Activated naive CD4-positive, alpha-beta T cell treated with anti-CD3 and anti-CD28 coated beads for 36 hours (primary cell): ENCODE measurements at regions of chr22 and their contacts with region 1.

Region 1: GRCh38 chr22:36528795-36529751 is at the start of gene EIF3D:
- DNase-seq: peak; percentile 99
- H3K4me3 Mint-ChIP-seq: peak within 1 kb of the TSS; percentile 96
- H3K27ac Mint-ChIP-seq: peak within 1 kb of the TSS; percentile 99
- H3K4me1 Mint-ChIP-seq: peaks cover 31% of the 10 kb centered on the region
- H3K27me3 Mint-ChIP-seq: no peaks in the 10 kb centered on the region
- total RNA-seq, gene EIF3D: 334 to 341 TPM

Region 2: GRCh38 chr22:36356708-36357694 is 172.1 kb before region 1 on chr22:
- CTCF ChIA-PET with region 1: no interaction called
- intact Hi-C with region 1: loop called (anchors 1 kb)
- DNase-seq: peak; percentile 78
- H3K4me3 Mint-ChIP-seq: peak overlapping the region; percentile 73
- H3K27ac Mint-ChIP-seq: peak overlapping the region; percentile 96
- H3K4me1 Mint-ChIP-seq: peaks cover 98% of the 10 kb centered on the region
- H3K27me3 Mint-ChIP-seq: no peaks in the 10 kb centered on the region

Region 3: DNA sequence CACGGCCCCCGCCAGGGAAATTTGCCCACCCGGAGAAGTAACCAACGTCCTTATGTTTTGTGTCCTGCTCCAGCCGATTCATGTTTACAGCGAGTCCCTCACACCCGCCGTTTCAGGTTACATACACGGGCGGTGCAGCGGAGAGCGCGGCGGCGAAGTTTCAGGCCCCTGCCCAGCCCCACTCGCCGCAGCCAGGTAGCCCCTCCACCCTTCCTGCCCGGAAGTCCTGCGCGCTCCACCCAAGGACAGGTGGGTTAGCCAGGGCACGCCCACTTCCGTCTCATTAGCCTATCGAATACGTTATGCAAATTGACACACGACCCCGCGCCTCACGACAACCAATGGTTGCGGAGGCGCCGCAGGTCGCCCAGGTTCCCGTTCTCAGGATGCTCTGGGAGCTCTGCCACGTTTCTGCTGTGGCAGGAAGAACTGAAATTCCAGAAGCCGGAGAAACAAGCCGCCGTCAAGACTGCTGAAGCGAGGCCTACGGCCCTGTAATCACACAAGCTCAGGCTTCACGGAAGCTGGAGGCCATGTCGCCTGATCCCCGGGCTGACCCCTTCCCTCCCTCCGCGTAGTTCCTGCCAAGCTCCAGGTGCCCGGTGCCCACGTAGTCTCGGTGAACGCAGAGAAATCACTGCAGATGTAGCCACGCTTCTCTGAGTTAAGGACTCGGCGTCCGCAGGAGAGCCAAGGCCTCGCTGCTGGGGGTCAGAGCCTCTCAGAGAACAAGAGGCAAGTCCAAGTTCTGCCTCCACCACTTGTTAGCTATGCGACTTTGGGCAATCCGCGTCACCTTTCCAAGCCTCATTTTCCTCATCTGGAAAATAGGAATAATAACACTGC is 118.9 kb before region 1 on chr22:
- CTCF ChIA-PET with region 1: no interaction called
- intact Hi-C with region 1: no loop called
- DNase-seq: peak; percentile 84
- H3K4me3 Mint-ChIP-seq: peak overlapping the region; percentile 78
- H3K27ac Mint-ChIP-seq: peak overlapping the region; percentile 76
- H3K4me1 Mint-ChIP-seq: peaks cover 30% of the 10 kb centered on the region
- H3K27me3 Mint-ChIP-seq: no peaks in the 10 kb centered on the region

Region 4: DNA sequence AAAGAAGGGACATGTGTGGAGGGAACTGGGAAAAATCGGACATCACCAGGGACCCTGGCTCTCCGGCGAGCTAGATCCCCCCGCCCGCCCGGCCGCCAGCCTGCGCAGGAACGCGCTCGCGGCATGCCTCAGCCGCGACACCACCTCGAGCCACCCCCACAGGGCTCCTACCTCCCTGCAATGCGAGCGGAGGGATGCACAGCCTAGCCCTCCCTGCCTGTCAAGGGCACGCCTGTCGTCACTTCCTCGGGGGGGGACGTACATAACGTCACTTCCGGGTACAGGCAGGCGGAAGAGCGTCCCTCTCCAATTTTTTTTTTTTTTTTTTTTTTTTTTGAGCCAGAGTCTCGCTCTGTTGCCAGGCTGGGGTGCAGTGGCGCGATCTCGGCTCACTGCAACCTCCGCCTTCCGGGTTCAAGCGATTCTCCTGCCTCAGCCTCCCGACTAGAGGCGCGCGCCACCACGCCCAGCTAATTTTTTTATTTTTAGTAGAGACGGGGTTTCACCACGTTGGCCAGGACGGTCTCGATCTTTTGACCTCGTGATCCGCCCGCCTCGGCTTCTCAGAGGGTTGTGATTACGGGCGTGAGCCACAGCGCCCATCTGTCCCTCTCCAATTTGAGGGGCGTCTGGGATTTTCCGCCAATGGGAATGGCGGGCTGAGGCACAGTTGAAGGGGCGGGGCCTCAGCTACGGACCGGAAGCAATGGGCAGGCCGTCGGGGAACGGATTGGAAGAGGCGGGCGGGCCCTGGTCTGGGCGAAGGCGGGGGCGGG is 47.5 kb before region 1 on chr22 and contains the start of gene TXN2:
- CTCF ChIA-PET with region 1: interaction called, 3 read pairs
- intact Hi-C with region 1: loop called (anchors 1 kb)
- DNase-seq: peak; percentile 98
- H3K4me3 Mint-ChIP-seq: peak within 1 kb of the TSS; percentile 95
- H3K27ac Mint-ChIP-seq: peak within 1 kb of the TSS; percentile 89
- H3K4me1 Mint-ChIP-seq: peaks cover 13% of the 10 kb centered on the region
- H3K27me3 Mint-ChIP-seq: no peaks in the 10 kb centered on the region
- total RNA-seq, gene TXN2: 108 to 113 TPM

Region 5: GRCh38 chr22:36546092-36546804 is 17.2 kb after region 1 on chr22:
- CTCF ChIA-PET with region 1: interaction called, 3 read pairs
- intact Hi-C with region 1: loop called (anchors 1 kb)
- DNase-seq: peak; percentile 59
- H3K4me3 Mint-ChIP-seq: no peak overlapping the region
- H3K27ac Mint-ChIP-seq: no peak overlapping the region
- H3K4me1 Mint-ChIP-seq: peaks cover 12% of the 10 kb centered on the region
- H3K27me3 Mint-ChIP-seq: peaks cover 15% of the 10 kb centered on the region

Region 6: DNA sequence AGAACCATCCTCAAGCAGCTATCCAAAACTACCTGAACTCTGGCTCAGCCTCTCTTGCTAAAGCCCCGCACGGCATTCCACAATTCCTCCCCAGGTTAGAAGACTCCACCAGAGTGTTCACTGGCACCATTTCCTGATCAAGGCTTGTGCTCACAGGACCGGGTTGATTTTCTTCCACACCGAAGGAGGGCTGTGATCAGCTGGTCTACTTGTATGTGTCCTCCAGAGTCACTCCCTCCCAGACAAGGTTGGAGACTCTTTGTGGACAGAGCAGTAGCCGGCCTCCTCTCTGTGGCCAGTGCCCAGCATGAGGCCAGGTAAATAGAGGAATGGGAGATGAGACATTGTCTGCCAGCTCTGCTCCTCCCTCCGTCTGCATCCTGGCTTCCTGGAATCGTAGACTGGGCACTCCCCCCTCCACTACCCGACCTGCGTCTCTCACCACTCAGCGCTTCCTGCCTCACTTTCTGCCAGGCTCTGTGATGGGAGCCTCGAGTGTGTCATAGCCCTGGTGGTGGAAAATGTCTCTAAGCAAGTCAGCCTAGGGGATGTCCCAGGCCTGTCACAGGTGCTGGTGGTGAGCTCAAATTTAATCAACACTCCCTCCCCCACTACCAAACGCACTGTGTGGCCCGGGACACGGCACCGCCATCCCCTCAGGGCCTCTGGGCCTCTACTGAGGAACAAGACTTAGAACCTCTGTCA is 593.0 kb after region 1 on chr22:
- CTCF ChIA-PET with region 1: no interaction called
- intact Hi-C with region 1: loop called (anchors 1 kb)
- DNase-seq: peak; percentile 98
- H3K4me3 Mint-ChIP-seq: peak overlapping the region; percentile 85
- H3K27ac Mint-ChIP-seq: peak overlapping the region; percentile 99
- H3K4me1 Mint-ChIP-seq: peaks cover 73% of the 10 kb centered on the region
- H3K27me3 Mint-ChIP-seq: no peaks in the 10 kb centered on the region